ENCODE measurements at regions of chr17 and their contacts with region 1.

Region 1: GRCh38 chr17:44247440-44247841 is 20.5 kb downstream of the SLC4A1 start:
- DNase-seq: no peak
- ATAC-seq: no peak
- H3K4me3 Mint-ChIP-seq: peak overlapping the region in 4 of 10 donors; percentile 1 to 75 (median 64)
- H3K27ac Mint-ChIP-seq: peak overlapping the region in 9 of 10 donors; percentile 71 to 96 (median 86)
- H3K4me1 Mint-ChIP-seq: peaks cover 22 to 60% (median 57%) of the 10 kb centered on the region in 4 donors
- H3K27me3 Mint-ChIP-seq: no peaks in the 10 kb centered on the region

Region 2: DNA sequence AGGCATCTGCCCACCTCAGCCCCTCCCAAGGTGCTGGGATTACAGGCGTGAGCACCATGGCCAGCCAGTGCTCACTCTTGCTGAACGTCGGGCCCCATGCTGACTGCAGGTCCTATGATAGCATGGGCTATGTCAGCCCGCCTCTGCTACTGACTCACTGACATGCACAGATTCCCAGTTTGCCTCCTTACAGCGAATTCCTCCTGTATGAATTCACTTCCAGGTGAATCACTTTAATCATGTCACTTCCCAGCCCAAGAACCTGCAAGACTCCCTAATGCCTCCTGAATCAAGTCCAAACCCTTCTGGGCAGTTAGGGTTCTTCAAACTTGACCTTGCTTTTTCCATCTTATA is 11.9 kb before region 1 on chr17:
- POLR2A ChIA-PET with region 1: no interaction called
- DNase-seq: no peak
- ATAC-seq: no peak
- H3K4me3 Mint-ChIP-seq: no peak overlapping the region
- H3K27ac Mint-ChIP-seq: peak overlapping the region in 2 of 10 donors; percentile 19 to 54
- H3K4me1 Mint-ChIP-seq: peaks cover 7 to 9% (median 8%) of the 10 kb centered on the region in 4 donors
- H3K27me3 Mint-ChIP-seq: peaks cover 0 to 4% (median 0%) of the 10 kb centered on the region in 5 donors

Region 3: GRCh38 chr17:44258811-44259351 is 11.4 kb after region 1 on chr17:
- POLR2A ChIA-PET with region 1: interaction called, 20 read pairs
- DNase-seq: no peak
- ATAC-seq: no peak
- H3K4me3 Mint-ChIP-seq: no peak overlapping the region
- H3K27ac Mint-ChIP-seq: peak overlapping the region in 1 of 10 donors; percentile 7
- H3K4me1 Mint-ChIP-seq: peaks cover 0 to 10% (median 3%) of the 10 kb centered on the region in 4 donors
- H3K27me3 Mint-ChIP-seq: no peaks in the 10 kb centered on the region